WTC11 (cell line): ENCODE measurements at regions of chr15 and their contacts with region 1.

Region 1: GRCh38 chr15:77720655-77721054 is 87.9 kb upstream of the LINGO1 start:
- DNase-seq: no peak
- ATAC-seq: no peak
- H3K4me3 Mint-ChIP-seq: no peak overlapping the region
- H3K27ac Mint-ChIP-seq: no peak overlapping the region
- H3K4me1 Mint-ChIP-seq: peaks cover 10% of the 10 kb centered on the region
- H3K27me3 Mint-ChIP-seq: no peaks in the 10 kb centered on the region
- CTCF ChIP-seq: no peak

Region 2: DNA sequence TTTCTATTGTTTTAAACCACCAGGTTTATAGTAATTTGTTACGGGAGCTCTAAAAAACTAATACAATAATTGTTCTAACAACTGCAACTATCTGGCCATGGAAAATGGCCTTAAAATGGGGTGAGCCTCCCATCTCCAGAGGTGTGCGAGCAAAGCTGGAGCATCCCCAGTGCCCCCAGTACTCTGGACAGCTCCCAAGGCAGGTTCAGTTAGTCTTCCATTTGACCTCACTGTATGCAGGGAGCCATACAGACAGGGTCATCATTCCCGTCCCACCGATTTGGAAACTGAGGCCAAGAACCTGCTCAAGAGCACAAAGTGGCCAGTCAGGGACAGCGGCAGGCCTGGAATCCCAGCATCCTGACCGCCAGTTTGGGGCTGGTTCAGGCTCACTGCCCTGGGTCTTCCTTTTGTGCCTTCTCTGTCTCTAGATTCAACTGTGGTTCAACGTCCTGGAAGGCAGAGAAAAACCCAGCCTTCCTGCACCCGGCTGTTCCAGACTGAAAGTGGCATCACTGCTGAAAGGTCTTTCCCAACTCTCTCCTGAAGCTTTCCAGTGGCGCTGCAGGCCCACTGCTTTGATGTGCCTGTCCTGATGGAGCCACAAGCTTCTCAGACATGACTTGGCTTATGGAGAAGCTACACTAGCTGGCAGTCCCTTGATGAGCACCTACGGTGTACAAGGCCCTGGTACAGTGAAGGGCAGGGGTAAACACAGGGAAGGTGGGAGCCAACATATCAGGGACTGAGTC is 11.3 kb before region 1 on chr15:
- CTCF ChIA-PET with region 1: interaction called, 18 read pairs
- POLR2A ChIA-PET with region 1: interaction called, 4 read pairs
- DNase-seq: no peak
- ATAC-seq: no peak
- H3K4me3 Mint-ChIP-seq: no peak overlapping the region
- H3K27ac Mint-ChIP-seq: no peak overlapping the region
- H3K4me1 Mint-ChIP-seq: peaks cover 8% of the 10 kb centered on the region
- H3K27me3 Mint-ChIP-seq: no peaks in the 10 kb centered on the region; the same call in 1 of the 2 replicates
- CTCF ChIP-seq: no peak

Region 3: GRCh38 chr15:77851691-77852090 is 131.0 kb after region 1 on chr15:
- CTCF ChIA-PET with region 1: no interaction called
- POLR2A ChIA-PET with region 1: no interaction called
- DNase-seq: no peak
- ATAC-seq: no peak
- H3K4me3 Mint-ChIP-seq: no peak overlapping the region
- H3K27ac Mint-ChIP-seq: no peak overlapping the region
- H3K4me1 Mint-ChIP-seq: peaks cover 6% of the 10 kb centered on the region
- H3K27me3 Mint-ChIP-seq: no peaks in the 10 kb centered on the region; the same call in 1 of the 2 replicates
- CTCF ChIP-seq: no peak